GM12878 (cell line): ENCODE measurements at regions of chr2 and their contacts with region 1.

Region 1: GRCh38 chr2:48448274-48449061 is 81.5 kb upstream of the STON1 start:
- DNase-seq: peak; percentile 53
- ATAC-seq: peak; percentile 69
- H3K4me3 ChIP-seq: peak overlapping the region; percentile 43
- H3K27ac ChIP-seq: peak overlapping the region; percentile 58
- H3K4me1 ChIP-seq: peaks cover 46% of the 10 kb centered on the region
- H3K27me3 ChIP-seq: no peaks in the 10 kb centered on the region
- CTCF ChIP-seq: no peak
- EP300 ChIP-seq: no peak
- POLR2A ChIP-seq: no peak
- RAD21 ChIP-seq: no peak

Region 2: DNA sequence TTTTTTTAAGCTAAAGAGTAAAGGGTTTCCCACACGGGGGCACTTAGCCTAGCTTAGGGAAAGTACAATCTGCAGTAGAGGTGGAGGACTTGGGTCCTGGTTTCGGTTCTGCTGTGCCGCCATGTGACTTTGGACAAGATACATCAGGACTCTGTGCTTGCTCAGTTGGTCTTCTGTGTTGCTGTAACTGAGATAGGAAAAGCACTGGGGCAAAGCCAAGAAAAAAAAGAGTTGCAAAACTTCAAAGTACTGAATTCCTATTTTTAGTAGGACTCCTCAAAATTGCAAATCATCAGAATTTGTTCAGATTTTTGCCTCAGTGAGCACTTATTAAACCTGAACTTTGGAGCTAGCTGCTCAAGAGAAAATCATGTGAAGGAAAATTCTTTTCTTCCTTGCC is 14.8 kb before region 1 on chr2:
- CTCF ChIA-PET with region 1: interaction called, 6 read pairs
- POLR2A ChIA-PET with region 1: interaction called, 11 read pairs
- RAD21 ChIA-PET with region 1: interaction called, 5 read pairs
- SMC1A ChIA-PET with region 1: interaction called, 17 read pairs
- in situ Hi-C with region 1: no loop called
- intact Hi-C with region 1: no loop called
- DNase-seq: no peak
- ATAC-seq: peak; percentile 65
- H3K4me3 ChIP-seq: no peak overlapping the region
- H3K27ac ChIP-seq: no peak overlapping the region
- H3K4me1 ChIP-seq: peaks cover 9% of the 10 kb centered on the region
- H3K27me3 ChIP-seq: no peaks in the 10 kb centered on the region
- CTCF ChIP-seq: no peak
- EP300 ChIP-seq: no peak
- POLR2A ChIP-seq: no peak
- RAD21 ChIP-seq: no peak